ENCODE measurements at regions of chr16 and their contacts with region 1.

Region 1: DNA sequence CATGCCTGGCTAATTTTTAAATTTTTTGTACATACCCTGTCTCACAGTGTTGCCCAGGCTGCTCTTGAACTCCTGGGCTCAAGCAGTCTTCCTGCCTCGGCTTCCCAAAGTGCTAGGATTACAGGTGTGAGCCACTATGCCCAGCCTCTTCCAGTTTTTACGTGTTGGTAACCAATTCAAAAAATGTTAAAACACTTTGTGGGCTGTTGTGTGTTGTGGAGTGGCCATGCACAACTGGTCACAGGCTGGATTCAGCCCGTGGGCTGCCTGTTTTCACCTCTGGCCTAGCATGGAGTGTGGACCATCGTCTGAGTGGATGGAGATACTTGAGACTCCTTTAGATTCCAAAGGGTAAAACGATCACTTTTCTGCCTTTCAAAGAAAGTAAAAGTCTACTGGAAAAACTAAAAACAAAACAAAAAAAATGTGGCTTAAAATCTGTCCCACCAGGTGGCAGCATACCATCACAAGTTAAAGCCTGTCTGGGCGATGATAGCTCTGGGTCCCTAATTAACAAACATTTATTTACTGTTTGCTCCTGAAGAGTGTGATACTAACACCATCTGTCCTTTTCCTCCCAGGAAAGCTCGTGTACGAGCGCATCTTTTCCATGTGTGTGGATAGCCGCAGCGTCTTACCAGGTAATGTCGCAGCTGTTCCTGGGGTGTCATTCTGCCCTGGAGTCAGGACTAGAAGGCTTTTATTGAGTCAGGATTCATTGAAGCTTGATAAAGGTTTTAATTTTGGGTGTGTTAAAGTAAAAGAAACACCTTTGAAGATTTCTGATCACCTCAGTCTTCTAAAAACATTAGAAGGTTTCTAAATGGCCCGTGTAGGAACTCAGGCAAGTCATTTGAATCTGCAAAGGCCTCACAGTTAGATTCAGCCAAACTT is 45.8 kb downstream of the VPS35L start:
- DNase-seq: peak in 1 of 2 experiments; percentile 56
- H3K4me3 ChIP-seq: no peak overlapping the region
- H3K27ac ChIP-seq: no peak overlapping the region
- H3K4me1 ChIP-seq: peaks cover 0 to 4% (median 2%) of the 10 kb centered on the region in 4 experiments; a peak in 3 of 7 replicates
- H3K27me3 ChIP-seq: no peaks in the 10 kb centered on the region
- CTCF ChIP-seq: peak in 2 of 3 experiments; percentile 51; a peak in 3 of 4 replicates
- EP300 ChIP-seq: no peak
- POLR2A ChIP-seq: no peak
- RAD21 ChIP-seq: peak; percentile 79 to 87

Region 2: DNA sequence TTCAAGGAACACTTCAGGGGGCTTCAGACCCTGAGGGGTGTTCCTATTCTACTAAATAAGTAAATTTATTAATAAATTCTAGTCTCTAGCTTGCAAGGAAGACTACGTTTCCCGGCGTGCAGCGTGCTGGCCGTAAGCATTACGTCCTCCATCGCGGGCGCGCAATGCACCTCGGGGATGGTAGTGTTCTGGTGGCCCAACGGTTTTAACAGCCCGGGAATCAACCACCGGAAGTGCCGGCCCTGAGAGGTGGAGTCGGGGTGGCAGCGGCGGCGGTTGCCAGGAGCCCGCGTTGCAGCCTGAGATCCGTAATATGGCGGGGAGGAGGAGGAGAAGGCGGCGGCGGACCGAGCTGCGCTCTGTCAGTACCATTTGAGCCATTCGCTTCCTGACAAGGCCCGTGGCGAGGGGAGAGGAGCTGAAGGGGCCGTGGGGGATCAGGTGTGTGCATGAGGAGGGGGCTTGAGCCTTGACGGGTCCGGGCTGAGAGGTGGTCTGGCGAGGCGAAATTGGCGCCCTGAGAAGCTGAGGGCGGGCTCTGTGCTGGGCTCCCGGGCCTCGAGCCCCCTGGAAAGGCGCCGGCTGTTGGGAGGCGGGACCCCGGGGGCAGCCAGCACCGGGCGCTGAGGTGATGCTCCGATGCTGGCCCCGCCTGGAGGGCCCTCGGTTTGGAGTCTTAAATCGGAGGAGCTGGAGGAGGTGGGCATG is 77.5 kb before region 1 on chr16 and contains the start of gene CCP110:
- CTCF ChIA-PET with region 1: no interaction called
- POLR2A ChIA-PET with region 1: no interaction called
- DNase-seq: peak; percentile 69 to 92
- H3K4me3 ChIP-seq: peak within 1 kb of the TSS; percentile 85 to 92 (median 88)
- H3K27ac ChIP-seq: peak within 1 kb of the TSS; percentile 9; the same call in 1 of the 2 replicates
- H3K4me1 ChIP-seq: peaks cover 5 to 17% (median 11%) of the 10 kb centered on the region in 4 experiments; a peak in 6 of 7 replicates
- H3K27me3 ChIP-seq: no peaks in the 10 kb centered on the region
- CTCF ChIP-seq: no peak
- EP300 ChIP-seq: no peak
- POLR2A ChIP-seq: no peak
- RAD21 ChIP-seq: no peak
- total RNA-seq, gene CCP110: 16.1 and 19.8 TPM in 2 replicates

Region 3: GRCh38 chr16:19574615-19575014 is 26.7 kb before region 1 on chr16:
- CTCF ChIA-PET with region 1: no interaction called
- POLR2A ChIA-PET with region 1: no interaction called
- DNase-seq: no peak
- H3K4me3 ChIP-seq: no peak overlapping the region
- H3K27ac ChIP-seq: no peak overlapping the region
- H3K4me1 ChIP-seq: no peaks in the 10 kb centered on the region
- H3K27me3 ChIP-seq: no peaks in the 10 kb centered on the region
- CTCF ChIP-seq: no peak
- EP300 ChIP-seq: no peak
- POLR2A ChIP-seq: no peak
- RAD21 ChIP-seq: no peak

Region 4: GRCh38 chr16:19613834-19614233 is 12.5 kb after region 1 on chr16:
- CTCF ChIA-PET with region 1: interaction called, 26 read pairs
- POLR2A ChIA-PET with region 1: no interaction called
- DNase-seq: no peak
- H3K4me3 ChIP-seq: no peak overlapping the region
- H3K27ac ChIP-seq: no peak overlapping the region
- H3K4me1 ChIP-seq: no peaks in the 10 kb centered on the region
- H3K27me3 ChIP-seq: no peaks in the 10 kb centered on the region
- CTCF ChIP-seq: no peak
- EP300 ChIP-seq: no peak
- POLR2A ChIP-seq: no peak
- RAD21 ChIP-seq: no peak